Panc1 (cell line): ENCODE measurements at regions of chr3 and their contacts with region 1.

Region 1: DNA sequence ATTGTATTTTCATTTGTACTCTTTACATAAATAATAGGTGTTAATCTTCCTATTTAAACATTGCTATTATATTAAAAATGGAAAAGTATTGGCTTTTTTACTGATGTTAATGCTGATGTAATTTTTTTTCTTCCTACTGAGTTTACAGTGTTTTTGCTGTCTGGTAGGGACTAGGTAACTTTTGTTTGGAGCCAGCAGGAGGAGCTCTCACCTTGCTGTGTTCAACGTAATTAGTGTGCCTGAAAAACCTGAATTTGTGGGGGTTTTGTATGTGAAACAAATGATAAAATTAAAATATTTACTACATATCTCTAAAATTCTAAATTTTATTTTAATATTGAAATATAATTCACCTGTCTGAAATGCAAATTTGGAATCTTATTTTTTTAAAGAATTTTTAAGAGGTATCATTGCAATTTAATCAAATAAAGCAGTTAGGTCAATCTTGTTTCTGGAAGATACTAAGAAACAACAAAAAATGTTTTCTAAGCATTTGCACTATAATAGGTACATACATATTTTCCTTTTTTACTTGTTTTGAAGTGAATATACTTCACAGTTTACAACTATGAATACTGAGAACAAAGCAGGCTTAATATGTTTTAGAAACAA is 48.8 kb downstream of the EPHA6 start:
- DNase-seq: peak; percentile 2
- ATAC-seq: no peak
- H3K4me3 ChIP-seq: no peak overlapping the region
- H3K27ac ChIP-seq: no peak overlapping the region
- H3K4me1 ChIP-seq: no peaks in the 10 kb centered on the region
- H3K27me3 ChIP-seq: no peaks in the 10 kb centered on the region
- CTCF ChIP-seq: peak; percentile 80; the same call in 1 of the 2 replicates

Region 2: GRCh38 chr3:97181704-97182103 is 318.5 kb after region 1 on chr3:
- CTCF ChIA-PET with region 1: no interaction called
- POLR2A ChIA-PET with region 1: no interaction called
- in situ Hi-C with region 1: no loop called
- intact Hi-C with region 1: no loop called
- DNase-seq: no peak
- ATAC-seq: no peak
- H3K4me3 ChIP-seq: no peak overlapping the region
- H3K27ac ChIP-seq: no peak overlapping the region
- H3K4me1 ChIP-seq: no peaks in the 10 kb centered on the region
- H3K27me3 ChIP-seq: no peaks in the 10 kb centered on the region
- CTCF ChIP-seq: no peak

Region 3: GRCh38 chr3:97658668-97659285 is 795.5 kb after region 1 on chr3:
- CTCF ChIA-PET with region 1: no interaction called
- POLR2A ChIA-PET with region 1: no interaction called
- in situ Hi-C with region 1: no loop called
- intact Hi-C with region 1: loop called (anchors 1 kb)
- DNase-seq: peak; percentile 12
- ATAC-seq: no peak; the same call in 1 of the 2 replicates
- H3K4me3 ChIP-seq: no peak overlapping the region
- H3K27ac ChIP-seq: no peak overlapping the region
- H3K4me1 ChIP-seq: no peaks in the 10 kb centered on the region
- H3K27me3 ChIP-seq: no peaks in the 10 kb centered on the region
- CTCF ChIP-seq: peak; percentile 76; the same call in 1 of the 2 replicates

Region 4: GRCh38 chr3:97719156-97719821 is 856.1 kb after region 1 on chr3:
- CTCF ChIA-PET with region 1: interaction called, 4 read pairs
- POLR2A ChIA-PET with region 1: no interaction called
- in situ Hi-C with region 1: no loop called
- intact Hi-C with region 1: loop called (anchors 2 kb)
- DNase-seq: peak; percentile 50
- ATAC-seq: peak; percentile 87
- H3K4me3 ChIP-seq: no peak overlapping the region
- H3K27ac ChIP-seq: no peak overlapping the region
- H3K4me1 ChIP-seq: no peaks in the 10 kb centered on the region
- H3K27me3 ChIP-seq: no peaks in the 10 kb centered on the region
- CTCF ChIP-seq: peak; percentile 97